ENCODE measurements at regions of chr6 and their contacts with region 1.

Region 1: GRCh38 chr6:133973109-133973971 is 20.3 kb downstream of the TBPL1 start:
- DNase-seq: peak; percentile 54 to 75 (median 74)
- H3K4me3 ChIP-seq: no peak overlapping the region
- H3K27ac ChIP-seq: no peak overlapping the region
- H3K4me1 ChIP-seq: no peaks in the 10 kb centered on the region
- H3K27me3 ChIP-seq: no peaks in the 10 kb centered on the region

Region 2: DNA sequence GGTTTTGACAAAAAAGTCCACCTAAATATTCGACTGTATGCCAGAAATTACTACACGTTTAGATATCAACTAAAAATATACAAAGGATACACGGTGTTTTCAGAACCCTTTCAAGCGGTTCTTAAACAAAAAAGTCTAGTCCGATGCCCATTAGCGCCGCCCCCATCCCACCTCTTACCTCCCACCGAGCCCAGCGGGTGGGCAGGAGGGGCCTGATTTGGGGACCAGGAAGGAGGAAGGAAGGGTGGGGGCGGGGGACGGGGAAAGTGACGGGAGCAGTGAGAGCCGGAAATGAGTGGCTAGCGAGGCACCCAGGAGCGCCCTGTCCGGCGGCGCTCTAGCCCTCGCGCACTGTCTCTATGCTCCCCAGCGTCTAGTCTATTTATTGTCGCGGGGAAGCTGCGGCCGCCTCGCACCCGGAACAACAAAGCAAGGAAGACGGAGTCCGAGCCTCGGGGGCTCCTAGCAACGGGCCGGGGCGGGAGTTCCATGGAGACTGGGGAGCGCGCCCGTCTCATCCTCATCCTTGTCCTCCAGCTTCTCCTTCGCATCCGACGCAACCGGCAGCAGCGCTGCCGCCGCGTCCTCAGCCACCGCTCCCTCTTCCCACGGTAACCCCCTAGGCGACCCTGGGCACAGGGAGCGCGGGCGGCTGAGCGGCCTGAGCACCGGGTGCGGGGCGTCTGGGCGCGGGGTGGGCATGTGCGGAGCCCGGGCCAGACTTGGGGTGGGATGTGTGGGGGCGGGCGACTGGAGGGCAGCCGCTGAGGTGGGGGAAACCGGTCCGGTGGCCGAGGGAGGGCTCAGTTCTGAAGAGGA is 20.3 kb before region 1 on chr6 and contains the start of gene TBPL1:
- CTCF ChIA-PET with region 1: interaction called, 11 read pairs
- POLR2A ChIA-PET with region 1: no interaction called
- DNase-seq: peak; percentile 96 to 97 (median 97)
- H3K4me3 ChIP-seq: peak within 1 kb of the TSS; percentile 81 to 97 (median 94)
- H3K27ac ChIP-seq: peak within 1 kb of the TSS; percentile 35 to 69
- H3K4me1 ChIP-seq: peaks cover 17 to 33% (median 22%) of the 10 kb centered on the region in 4 experiments
- H3K27me3 ChIP-seq: peaks cover 0 to 2% (median 0%) of the 10 kb centered on the region in 5 experiments

Region 3: GRCh38 chr6:133989525-133989924 is 16.2 kb after region 1 on chr6:
- CTCF ChIA-PET with region 1: interaction called, 11 read pairs
- POLR2A ChIA-PET with region 1: no interaction called
- DNase-seq: no peak
- H3K4me3 ChIP-seq: no peak overlapping the region
- H3K27ac ChIP-seq: no peak overlapping the region
- H3K4me1 ChIP-seq: peaks cover 0 to 2% (median under 1%) of the 10 kb centered on the region in 4 experiments
- H3K27me3 ChIP-seq: peaks cover 0 to 17% (median 5%) of the 10 kb centered on the region in 5 experiments

Region 4: DNA sequence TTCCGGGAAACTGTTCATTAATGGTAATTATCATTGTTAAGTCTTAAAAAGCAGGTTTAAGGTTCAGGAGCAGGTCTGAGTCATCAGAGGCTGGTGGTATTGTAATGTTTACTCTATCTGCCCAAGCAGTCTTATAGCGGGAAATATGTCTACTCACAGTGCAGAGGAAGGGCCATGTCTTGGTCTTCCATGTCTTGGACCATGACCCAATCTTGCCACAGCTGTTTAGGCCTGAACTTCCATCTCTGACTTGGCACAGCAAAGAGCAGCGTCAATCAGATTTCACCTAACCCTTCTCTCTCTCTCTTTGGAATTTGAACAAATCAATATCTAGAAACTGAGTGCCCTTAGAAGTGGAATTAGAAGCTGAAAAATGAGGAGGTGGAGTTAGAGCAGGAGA is 53.3 kb after region 1 on chr6:
- CTCF ChIA-PET with region 1: interaction called, 20 read pairs
- POLR2A ChIA-PET with region 1: no interaction called
- DNase-seq: no peak
- H3K4me3 ChIP-seq: no peak overlapping the region
- H3K27ac ChIP-seq: no peak overlapping the region
- H3K4me1 ChIP-seq: peaks cover 4 to 9% (median 5%) of the 10 kb centered on the region in 4 experiments
- H3K27me3 ChIP-seq: peaks cover 0 to 41% (median 15%) of the 10 kb centered on the region in 5 experiments